MCF 10A (cell line): ENCODE measurements at regions of chr10 and their contacts with region 1.

Region 1: GRCh38 chr10:87734987-87735827 is 75.5 kb downstream of the PAPSS2 start:
- DNase-seq: peak; percentile 61
- H3K4me3 Mint-ChIP-seq: no peak overlapping the region
- H3K27ac Mint-ChIP-seq: no peak overlapping the region
- H3K4me1 Mint-ChIP-seq: peaks cover 6% of the 10 kb centered on the region
- H3K27me3 Mint-ChIP-seq: no peaks in the 10 kb centered on the region
- CTCF ChIP-seq: peak; percentile 72

Region 2: GRCh38 chr10:87646939-87647338 is 88.3 kb before region 1 on chr10:
- CTCF ChIA-PET with region 1: interaction called, 10 read pairs
- POLR2A ChIA-PET with region 1: interaction called, 5 read pairs
- intact Hi-C with region 1: no loop called
- DNase-seq: no peak
- H3K4me3 Mint-ChIP-seq: no peak overlapping the region
- H3K27ac Mint-ChIP-seq: no peak overlapping the region
- H3K4me1 Mint-ChIP-seq: no peaks in the 10 kb centered on the region
- H3K27me3 Mint-ChIP-seq: no peaks in the 10 kb centered on the region
- CTCF ChIP-seq: no peak

Region 3: DNA sequence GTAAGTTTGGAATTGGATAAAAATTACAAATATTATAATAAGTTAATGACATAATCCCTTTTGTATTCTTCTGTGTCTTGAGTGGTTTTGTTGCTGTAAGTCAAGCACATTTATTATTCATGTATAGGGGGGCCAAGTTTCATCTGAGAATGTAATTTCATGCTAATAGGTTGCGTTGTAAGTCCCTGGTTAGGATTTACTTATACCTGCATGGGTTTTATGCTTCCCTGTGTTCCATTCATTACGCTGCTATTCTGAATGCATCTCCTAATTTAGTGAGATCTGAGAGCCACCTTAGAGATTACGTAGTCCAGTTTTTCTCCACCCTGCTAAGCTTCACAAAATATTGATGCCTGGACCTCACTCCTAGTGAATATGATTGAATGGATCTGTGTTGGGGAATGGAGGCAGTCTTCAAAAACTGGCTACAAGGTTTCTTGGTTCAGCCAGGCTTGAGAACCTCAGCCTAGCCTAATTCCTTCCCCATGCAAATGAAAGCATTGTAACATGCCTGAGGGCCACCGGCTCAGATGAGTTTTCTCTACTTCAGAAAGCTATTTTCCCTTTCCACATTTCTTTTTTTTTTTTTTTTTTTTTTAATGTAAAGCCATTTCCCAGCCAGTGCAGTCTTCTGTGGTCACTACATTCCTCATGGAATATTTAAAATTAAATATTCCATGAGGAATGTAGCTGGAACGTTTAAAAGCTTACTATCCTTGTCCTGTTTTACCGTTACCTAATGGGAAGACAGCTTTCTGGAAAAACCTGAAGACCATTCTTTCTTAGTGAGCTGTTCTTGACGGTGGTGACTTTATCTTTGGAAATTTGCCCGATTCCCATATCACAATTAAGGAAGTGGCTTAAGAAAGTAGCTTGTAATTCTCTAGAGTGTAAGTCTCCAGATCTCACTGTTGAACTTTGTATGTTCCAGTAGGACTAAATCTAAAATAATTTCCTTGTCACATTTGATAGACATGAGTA is 59.5 kb before region 1 on chr10:
- CTCF ChIA-PET with region 1: interaction called, 10 read pairs
- POLR2A ChIA-PET with region 1: no interaction called
- intact Hi-C with region 1: no loop called
- DNase-seq: no peak
- H3K4me3 Mint-ChIP-seq: no peak overlapping the region
- H3K27ac Mint-ChIP-seq: no peak overlapping the region
- H3K4me1 Mint-ChIP-seq: no peaks in the 10 kb centered on the region
- H3K27me3 Mint-ChIP-seq: no peaks in the 10 kb centered on the region
- CTCF ChIP-seq: no peak

Region 4: GRCh38 chr10:87702260-87702972 is 32.8 kb before region 1 on chr10:
- CTCF ChIA-PET with region 1: interaction called, 10 read pairs
- POLR2A ChIA-PET with region 1: interaction called, 8 read pairs
- intact Hi-C with region 1: no loop called
- DNase-seq: no peak
- H3K4me3 Mint-ChIP-seq: no peak overlapping the region
- H3K27ac Mint-ChIP-seq: no peak overlapping the region
- H3K4me1 Mint-ChIP-seq: peaks cover 15% of the 10 kb centered on the region
- H3K27me3 Mint-ChIP-seq: no peaks in the 10 kb centered on the region
- CTCF ChIP-seq: no peak

Region 5: DNA sequence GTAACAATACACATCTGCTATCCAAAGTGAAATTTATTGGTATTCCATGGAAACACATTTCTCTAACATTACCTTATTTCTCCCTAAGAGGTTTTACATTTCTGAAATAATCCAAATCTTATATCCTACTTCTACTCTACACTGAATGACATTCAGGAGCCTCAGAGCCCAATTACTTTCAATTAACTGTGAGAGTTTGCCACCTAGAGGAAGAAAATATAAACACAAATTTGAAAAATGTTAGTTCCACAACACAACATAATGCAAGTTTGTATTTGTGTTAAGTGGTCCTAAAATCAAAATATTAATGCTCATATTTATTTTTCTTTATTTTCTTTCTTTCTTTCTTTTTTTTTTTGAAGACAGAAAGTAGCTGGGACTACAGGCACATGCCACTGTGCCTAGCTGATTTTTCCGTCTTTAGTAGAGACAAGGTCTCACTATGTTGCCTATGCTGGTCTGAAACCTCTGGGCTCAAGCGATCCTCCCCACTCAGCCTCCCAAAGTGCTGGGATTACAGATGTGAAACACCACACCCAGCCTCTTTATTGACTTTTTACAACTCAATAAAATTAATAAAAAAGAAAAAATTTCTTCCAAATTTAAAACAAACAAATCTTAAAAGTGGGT is 36.8 kb after region 1 on chr10:
- CTCF ChIA-PET with region 1: interaction called, 13 read pairs
- POLR2A ChIA-PET with region 1: interaction called, 4 read pairs
- intact Hi-C with region 1: no loop called
- DNase-seq: peak; percentile 39
- H3K4me3 Mint-ChIP-seq: no peak overlapping the region
- H3K27ac Mint-ChIP-seq: no peak overlapping the region
- H3K4me1 Mint-ChIP-seq: peaks cover 11% of the 10 kb centered on the region
- H3K27me3 Mint-ChIP-seq: no peaks in the 10 kb centered on the region
- CTCF ChIP-seq: peak; percentile 33

Region 6: DNA sequence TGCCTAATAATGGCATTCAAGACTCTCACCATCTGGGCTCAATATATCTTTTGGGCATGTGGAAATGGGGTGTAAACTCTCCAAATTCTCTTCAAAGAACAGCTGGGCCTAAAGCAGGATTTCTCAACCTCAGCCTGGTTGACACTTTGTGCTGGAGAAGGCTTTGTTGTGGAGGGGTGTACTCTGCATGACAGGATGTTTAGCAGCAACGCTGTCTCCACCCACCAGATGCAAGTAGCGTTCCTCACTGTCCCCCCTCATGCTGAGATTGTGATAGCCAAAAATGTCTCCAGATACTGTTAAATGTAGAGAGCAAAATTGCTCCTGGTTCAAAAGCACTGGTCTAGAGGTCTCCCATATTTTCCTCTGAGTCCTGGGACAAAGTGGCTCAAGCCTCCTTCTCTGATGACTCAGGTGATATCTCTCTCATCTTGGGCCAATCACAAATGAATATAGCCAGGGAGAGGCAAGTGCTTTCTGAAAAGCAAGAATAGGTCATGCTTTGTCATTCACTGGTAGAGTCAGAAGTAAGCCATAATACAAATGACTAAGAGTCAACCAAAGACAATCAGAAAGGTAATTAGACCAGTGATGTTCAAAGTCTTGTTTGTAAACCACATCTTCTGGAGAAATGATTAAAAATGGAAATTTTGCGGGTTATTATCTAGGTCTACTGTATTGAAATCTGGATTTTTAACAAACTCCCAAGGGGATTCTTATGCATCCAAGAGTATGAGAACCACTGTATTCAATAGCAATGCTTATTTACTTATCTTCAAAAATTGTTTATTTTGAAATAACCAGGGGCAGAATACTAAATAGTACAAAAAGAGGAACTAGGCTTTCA is 459.1 kb after region 1 on chr10:
- CTCF ChIA-PET with region 1: no interaction called
- POLR2A ChIA-PET with region 1: no interaction called
- intact Hi-C with region 1: no loop called
- DNase-seq: peak; percentile 10
- H3K4me3 Mint-ChIP-seq: no peak overlapping the region
- H3K27ac Mint-ChIP-seq: no peak overlapping the region
- H3K4me1 Mint-ChIP-seq: no peaks in the 10 kb centered on the region
- H3K27me3 Mint-ChIP-seq: no peaks in the 10 kb centered on the region
- CTCF ChIP-seq: no peak